ENCODE measurements at regions of chr10 and their contacts with region 1.

Region 1: GRCh38 chr10:50794490-50794889 is 54.8 kb downstream of the ASAH2B start:
- DNase-seq: peak; percentile 45
- ATAC-seq: no peak; the same call in 1 of the 2 replicates
- H3K4me3 ChIP-seq: no peak overlapping the region
- H3K27ac ChIP-seq: no peak overlapping the region
- H3K4me1 ChIP-seq: no peaks in the 10 kb centered on the region
- H3K27me3 ChIP-seq: peaks cover 33% of the 10 kb centered on the region; the same call in 1 of the 2 replicates
- CTCF ChIP-seq: no peak

Region 2: DNA sequence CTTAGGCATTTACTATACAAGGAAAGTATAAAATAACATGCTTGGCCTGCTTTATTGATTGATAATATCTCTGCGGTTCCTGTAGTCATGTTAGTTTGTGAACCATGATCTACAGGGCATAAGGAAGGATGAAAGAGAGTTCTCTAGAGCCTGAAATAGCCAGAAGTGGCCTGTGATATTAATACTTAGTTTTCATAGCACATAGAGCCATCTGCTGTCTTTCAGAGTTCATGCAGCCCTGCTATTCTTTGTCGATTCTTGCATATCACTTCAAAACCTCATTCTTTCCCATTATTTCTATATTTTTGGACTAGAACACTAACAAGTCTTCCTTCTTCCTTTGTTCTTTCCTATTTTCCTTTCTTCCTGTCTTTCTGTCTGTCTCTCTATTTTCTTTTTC is 253.4 kb after region 1 on chr10:
- CTCF ChIA-PET with region 1: no interaction called
- POLR2A ChIA-PET with region 1: no interaction called
- intact Hi-C with region 1: loop called (anchors 5 kb)
- DNase-seq: peak; percentile 41
- ATAC-seq: peak; percentile 60
- H3K4me3 ChIP-seq: no peak overlapping the region
- H3K27ac ChIP-seq: no peak overlapping the region
- H3K4me1 ChIP-seq: no peaks in the 10 kb centered on the region
- H3K27me3 ChIP-seq: peaks cover 29% of the 10 kb centered on the region; the same call in 1 of the 2 replicates
- CTCF ChIP-seq: peak; percentile 58

Measured in PC-3 (cell line).